ENCODE measurements at regions of chr5 and their contacts with region 1.

Region 1: DNA sequence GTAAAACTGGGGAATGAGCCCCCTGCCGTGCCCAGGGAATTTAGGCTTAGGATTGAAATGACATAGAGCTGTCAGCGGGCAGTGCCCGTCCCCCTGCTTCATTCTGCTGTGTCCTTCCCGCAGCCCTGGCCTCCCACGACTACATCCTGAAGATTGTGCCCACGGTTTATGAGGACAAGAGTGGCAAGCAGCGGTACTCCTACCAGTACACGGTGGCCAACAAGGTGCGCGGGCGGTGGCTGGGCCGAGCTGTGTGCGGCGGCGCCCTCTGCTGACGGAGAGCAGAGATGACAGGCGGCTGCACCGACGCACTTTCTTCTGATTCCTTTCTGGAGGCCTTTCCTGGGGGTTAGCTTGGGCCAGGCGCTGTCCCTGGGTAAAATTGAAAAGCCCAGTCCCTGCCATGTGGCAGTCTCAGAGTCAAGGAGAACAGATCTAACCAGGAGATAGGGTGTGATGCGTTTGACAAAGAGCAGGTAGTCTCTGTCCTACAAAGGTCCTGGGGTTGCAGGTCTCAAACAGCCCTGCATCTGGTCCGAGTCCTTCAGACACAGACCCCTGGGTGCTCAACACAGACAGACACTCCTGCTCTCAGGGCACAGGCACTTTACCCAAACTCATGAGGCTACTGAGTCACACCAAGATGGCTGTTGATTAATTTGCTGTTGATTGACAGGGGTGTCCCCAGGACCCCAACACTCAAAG is 26.8 kb upstream of the RPL26L1 start:
- DNase-seq: peak; percentile 86
- CTCF ChIP-seq: peak; percentile 96

Region 2: GRCh38 chr5:172640822-172641358 is 291.6 kb before region 1 on chr5 and contains the start of gene NEURL1B:
- CTCF ChIA-PET with region 1: no interaction called
- POLR2A ChIA-PET with region 1: no interaction called
- DNase-seq: peak; percentile 65
- CTCF ChIP-seq: no peak

Region 3: DNA sequence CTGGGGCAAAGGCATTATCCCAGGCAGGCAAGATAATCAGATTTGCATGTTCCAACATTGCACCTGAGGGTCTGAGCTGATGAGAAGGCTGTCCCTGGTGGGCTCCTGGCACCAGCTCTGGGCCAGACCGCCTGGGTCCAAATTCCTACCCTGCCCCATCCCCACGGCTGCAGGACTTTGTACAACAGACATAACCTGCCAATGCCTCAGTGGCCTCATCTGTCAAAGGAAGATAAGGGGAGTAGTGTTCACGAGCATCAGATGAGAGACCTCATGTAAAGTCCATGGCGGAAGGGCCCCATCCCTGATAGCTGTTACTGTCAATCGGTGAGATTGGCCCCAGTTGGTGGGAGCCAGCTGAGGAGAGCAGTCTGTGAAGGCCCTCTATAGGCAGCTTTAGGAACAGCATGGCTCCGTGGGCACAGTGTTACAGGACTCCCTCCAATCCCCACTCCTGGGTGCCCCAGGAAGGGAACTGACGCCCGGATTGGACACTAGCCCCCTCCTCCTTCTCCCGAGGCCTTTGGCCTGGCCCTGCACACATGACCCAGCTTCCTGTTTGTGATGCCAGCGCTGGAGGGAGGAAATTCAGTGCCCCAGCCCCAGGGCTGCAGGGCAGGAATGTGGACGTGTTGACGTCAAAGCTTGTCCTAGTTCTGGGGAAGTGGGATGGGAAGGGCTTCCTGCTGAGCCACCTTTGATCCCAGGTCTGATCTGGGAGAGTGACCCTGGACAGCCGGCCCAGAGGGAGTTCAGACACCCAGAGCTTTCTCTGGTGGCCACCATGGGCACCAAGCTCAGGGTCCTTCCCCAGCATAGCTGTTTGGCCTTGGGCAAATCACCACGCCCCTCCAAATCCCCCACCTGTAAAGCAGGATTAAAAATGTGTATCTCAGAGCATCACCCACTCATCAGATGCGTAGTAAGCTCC is 217.7 kb before region 1 on chr5:
- CTCF ChIA-PET with region 1: interaction called, 282 read pairs
- POLR2A ChIA-PET with region 1: no interaction called
- DNase-seq: peak; percentile 75
- CTCF ChIP-seq: peak; percentile 62

Region 4: DNA sequence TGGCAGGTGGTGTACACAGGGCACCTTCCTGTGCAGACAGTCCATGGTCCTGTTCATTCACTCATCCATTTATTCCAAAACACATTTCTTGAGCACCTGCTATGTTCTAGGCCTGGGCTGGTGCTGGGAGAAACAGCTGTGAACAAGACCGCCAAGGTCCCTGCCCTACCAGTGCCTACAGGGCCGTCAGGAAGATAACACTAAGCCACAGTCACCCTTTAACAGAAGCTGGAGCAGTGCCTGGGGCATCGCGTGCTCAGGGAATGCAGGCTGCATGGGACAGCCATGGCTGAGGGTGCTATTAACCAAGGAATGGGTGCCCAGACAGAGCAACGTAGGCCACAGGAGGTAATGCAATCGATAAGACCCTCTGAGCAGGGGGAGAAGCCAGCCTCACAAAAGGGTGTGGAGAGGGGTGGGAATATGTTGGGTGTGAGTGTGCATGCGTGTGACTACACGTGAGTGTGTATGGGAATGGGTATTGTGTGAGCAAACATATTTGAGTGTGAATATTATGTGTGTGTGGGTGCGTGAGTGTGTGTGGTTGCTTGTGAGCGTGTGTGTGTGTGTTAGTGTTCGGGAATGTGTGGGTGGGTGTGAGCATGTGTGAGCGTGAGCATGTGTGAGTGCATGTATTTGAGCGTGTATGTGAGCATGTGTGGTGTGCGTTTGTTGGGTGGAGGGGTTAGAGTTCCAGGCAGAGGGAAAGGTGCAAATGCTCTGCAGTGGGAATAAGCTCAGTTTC is 180.5 kb before region 1 on chr5:
- CTCF ChIA-PET with region 1: interaction called, 11 read pairs
- POLR2A ChIA-PET with region 1: no interaction called
- DNase-seq: no peak
- CTCF ChIP-seq: no peak

Region 5: GRCh38 chr5:172904643-172905347 is 27.7 kb before region 1 on chr5:
- CTCF ChIA-PET with region 1: interaction called, 34 read pairs
- POLR2A ChIA-PET with region 1: no interaction called
- DNase-seq: no peak
- CTCF ChIP-seq: no peak

Region 6: DNA sequence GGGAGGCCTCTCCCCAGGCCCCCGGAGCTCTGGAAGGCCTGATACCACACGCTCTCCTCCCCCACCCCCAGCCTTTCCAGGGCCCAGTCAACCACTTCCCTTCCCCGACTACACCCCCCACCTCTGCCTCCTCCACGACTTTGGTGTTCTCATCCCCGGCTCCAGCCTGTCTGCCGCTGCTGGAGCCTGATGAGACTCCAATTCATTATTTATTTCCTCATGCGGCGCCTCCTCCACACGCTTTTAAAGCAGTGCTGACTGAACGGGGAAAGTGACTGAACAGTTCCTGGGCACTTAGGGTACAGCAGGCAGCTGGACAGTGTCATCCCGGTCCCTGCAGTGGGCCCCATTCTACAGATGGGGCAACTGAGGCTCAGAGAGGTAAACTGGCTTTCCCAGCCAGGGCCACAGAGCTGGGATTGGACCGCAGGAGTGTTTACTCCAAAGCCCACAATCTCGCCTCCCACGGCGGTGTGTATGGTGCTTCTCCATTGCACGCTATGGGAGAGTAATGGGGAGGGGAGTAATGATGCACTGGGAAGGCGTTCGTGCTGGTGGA is 10.9 kb after region 1 on chr5:
- CTCF ChIA-PET with region 1: interaction called, 25 read pairs
- POLR2A ChIA-PET with region 1: no interaction called
- DNase-seq: no peak
- CTCF ChIP-seq: no peak

Region 7: DNA sequence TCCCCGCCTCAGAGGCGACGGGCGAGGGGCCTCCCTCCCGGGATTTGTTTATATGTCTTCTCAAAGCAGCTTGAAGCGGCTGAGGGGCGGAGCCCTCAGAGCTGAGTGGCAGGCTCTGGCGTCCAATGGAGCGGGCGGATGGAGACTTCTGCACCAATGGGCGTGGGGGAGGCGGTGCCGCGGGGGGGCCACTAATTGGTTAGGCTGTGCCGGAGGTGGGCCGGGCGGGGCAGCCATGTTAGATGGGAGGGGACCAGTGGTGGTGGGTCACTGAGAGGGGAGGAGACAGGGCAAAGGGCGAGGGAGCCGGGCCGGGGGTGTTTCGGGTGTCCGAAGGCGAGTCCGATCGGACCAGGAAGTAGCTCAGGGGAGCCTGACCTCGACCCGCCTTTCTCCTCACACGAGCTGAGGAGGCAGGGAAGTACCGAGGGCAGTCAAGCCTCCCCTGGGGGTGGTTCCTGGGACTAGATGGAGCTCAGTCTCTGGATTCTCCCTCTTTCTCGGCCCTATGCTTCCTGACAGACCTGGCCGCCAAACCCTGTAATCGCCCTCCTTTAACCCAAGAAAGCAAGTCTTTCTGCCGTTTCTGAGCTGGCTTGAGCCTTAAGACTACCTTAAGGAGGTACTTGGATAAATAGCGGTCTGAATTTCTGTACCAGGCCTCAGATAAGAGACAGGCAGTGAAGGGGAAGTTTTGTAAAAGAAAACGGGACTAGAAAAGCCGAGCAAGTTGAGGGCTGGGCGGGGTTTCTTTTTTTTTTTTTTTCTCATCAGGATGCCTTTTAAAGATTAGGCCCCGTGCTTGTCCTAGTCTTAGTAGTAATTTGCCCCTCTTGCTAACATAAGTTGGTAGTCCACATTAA is 124.8 kb after region 1 on chr5:
- CTCF ChIA-PET with region 1: no interaction called
- POLR2A ChIA-PET with region 1: no interaction called
- DNase-seq: peak; percentile 98
- CTCF ChIP-seq: no peak

Region 8: DNA sequence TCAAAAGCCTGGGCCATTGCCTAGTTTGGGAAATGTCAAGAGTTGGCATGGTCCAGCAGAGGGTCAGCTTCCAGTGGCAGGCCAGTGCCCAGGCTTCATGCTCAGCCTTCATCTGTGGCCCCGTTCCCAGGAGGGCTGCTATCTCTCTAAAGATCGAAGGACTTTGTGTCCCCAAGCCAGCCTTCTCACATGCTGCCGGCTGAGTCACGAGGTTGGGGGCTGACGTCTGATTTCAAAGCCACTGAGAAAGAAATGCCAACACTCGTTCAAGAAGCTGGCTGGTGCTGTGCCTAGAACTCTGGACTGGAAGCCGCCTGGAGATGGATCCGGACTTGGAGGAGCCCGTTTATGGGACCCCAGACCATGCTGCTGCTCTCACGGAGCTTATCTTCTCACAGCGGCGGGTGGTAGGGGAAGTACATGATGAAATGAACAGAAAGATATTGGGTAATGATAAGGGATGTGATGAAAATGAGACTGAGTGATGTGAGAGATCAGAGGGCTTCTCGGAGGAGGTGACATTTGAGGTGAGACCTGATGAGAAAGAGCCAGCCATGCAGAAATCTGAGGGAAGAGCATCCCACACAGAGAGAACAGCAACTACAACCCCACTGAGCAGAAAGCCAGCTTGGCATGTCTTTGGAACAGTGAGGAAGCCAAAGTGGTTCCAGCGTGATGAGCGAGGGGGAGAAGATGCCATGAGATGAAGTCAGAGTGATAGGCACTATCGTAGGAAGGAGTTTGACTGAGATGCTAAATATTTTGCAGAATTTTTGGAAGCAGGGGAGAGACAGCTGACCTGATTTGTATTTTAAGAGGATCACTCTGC is 738.9 kb after region 1 on chr5:
- CTCF ChIA-PET with region 1: no interaction called
- POLR2A ChIA-PET with region 1: no interaction called
- DNase-seq: no peak
- CTCF ChIP-seq: no peak

Measured in GM10248 (cell line).